Activated T-helper 1 cell treated with anti-CD3 and anti-CD28 coated beads, Interleukin-12 subunit alpha, Interleukin-12 subunit beta, Interleukin-2, Interleukin-4 antibody, amounts not matched to agents 30 ng/mL and 10 ng/mL and 1 ng/mL, durations not matched to agents 14 hours and 24 hours and 36 hours (primary cell): ENCODE measurements at regions of chr11 and their contacts with region 1.

Region 1: DNA sequence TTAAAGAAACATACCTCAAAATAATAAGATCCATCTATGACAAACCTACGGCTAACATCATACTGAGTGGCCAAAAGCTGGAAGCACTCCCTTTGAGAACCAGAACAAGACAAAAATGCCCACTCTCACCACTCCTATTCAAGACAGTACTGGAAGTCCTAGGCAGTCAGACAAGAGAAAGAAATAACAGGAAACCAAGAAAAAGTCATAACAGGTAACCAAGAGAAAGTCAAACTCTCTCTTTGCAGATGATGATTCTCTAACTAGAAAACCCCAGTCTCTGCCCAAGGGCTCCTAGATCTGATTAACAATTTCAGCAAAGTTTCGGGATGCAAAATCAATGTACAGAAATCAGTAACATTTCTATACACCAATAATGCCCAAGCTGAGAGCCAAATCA is 35.6 kb downstream of the TMEM123 start:
- DNase-seq: no peak
- H3K4me3 Mint-ChIP-seq: peak overlapping the region; percentile 26
- H3K27ac Mint-ChIP-seq: peak overlapping the region; percentile 67
- H3K4me1 Mint-ChIP-seq: peaks cover 84% of the 10 kb centered on the region
- H3K27me3 Mint-ChIP-seq: no peaks in the 10 kb centered on the region

Region 2: DNA sequence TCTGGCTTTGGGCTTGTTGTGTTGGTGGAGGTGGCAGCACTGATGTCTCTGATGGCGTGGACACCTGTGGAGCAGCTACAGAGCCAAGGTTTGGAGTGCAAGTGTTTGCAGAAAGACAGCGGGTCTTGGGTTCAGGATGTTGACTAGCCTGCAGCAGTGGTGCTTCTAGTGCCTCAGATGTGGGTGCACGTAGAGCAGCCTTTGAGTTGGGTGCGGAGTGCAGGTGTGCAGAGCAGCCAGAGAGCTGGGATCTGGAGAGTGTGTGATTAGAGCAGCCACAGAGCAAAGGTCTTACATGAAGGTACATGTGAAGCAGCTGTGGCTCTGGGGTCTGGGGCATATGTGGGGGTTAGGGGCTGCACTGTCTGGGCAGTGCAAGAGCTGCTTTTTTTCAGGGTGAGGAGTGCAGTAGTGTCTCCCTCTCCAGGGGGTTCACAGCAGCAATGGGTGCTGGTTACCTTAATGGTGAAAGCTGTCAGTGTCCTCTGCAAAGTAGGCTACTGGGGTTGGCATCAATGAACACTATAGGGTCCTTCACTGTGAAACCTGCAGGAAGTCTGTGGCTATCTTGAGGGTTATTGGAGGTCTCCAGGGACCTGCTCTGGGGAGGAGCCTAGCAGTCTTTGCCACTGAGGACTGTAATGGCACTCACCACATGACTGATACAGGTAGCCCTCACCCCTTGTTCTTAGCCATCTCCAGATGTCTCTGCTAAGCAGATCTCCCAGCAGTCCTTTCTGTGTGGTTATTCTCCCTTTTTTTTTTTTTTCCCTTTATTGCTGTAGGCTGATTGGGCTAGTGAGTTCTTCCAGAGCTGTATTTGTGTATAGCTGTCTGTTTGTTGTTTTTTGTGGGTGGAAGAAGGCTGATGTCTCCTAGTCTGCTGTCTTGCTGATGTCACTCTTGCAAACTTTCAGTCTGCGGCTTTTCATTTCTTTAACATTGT is 55.6 kb before region 1 on chr11:
- intact Hi-C with region 1: no loop called
- DNase-seq: no peak
- H3K4me3 Mint-ChIP-seq: peak overlapping the region; percentile 48
- H3K27ac Mint-ChIP-seq: peak overlapping the region; percentile 10
- H3K4me1 Mint-ChIP-seq: peaks cover 36% of the 10 kb centered on the region
- H3K27me3 Mint-ChIP-seq: no peaks in the 10 kb centered on the region

Region 3: DNA sequence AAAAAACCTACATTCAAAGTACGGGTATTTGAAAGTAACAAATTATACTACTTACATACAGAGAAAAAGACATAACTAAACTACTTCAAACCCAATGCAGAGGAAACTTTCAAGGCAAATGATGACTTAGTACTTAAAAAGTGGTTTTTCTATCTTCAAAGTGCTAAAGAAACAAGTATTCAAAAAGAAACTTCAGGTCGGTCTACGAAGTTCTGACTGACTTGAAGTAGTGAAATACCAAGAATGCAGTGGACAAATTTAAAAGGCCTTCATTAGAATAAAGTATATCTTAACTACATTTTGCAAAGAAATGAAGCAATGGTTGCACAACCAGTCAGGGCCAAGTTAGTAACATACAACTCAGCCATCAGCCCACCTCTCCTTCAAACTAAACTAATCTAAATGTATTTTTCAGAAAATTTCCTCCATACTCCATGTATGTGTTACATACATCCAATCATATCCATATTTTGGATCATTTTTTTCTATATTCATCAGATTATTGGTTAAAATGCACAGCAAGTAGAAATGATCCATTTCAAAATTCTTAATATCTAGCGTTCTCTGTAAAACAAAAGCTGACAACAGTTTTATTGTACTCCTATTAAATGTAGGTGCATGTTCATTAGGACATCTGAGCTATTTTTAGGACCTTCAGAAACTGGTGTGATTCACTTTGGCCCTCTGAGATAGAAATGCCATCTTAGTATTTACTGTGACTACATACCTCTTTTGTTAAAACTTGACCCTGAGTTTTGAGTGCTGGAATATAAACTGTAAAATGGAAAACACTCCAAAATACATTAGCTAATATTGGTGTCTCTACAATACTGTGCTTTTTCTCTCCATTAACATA is 20.0 kb before region 1 on chr11:
- intact Hi-C with region 1: loop called (anchors 1 kb)
- DNase-seq: no peak
- H3K4me3 Mint-ChIP-seq: peak overlapping the region; percentile 45
- H3K27ac Mint-ChIP-seq: peak overlapping the region; percentile 63
- H3K4me1 Mint-ChIP-seq: peaks cover 52% of the 10 kb centered on the region
- H3K27me3 Mint-ChIP-seq: no peaks in the 10 kb centered on the region

Region 4: DNA sequence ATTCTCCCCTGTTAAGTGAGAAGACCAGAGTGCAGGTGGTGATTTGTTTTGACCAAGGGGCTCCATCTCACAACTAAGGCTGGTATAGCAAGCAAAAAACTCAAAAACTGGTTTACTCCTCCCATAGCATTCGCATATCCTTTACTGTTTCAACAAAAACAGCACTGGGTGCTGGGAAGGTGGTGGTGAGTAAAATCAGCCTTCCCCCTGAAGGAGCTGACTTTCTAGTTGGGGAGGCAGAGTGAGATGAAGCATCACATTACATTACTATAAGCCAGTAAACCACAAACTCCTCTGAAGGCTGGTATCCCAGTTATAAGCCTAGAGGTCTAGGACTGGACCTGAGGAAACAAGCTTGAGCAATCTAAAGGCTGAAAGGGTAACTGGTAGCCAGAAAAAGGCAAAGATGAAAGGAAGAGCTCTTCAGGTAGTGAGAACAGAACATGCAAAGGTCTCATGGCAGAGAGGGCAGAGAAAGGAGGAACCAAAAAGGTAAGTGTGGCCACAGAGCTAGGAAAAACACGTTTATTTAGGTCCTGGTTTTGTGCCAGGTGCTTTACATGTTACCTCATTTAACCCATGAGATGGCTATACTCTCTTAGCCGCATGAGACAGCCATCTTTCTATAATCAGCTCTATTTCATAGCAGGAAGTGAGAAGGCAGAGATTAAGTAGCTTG is 13.3 kb after region 1 on chr11:
- intact Hi-C with region 1: loop called (anchors 1 kb)
- DNase-seq: no peak
- H3K4me3 Mint-ChIP-seq: peak overlapping the region; percentile 62
- H3K27ac Mint-ChIP-seq: peak overlapping the region; percentile 92
- H3K4me1 Mint-ChIP-seq: peaks cover 55% of the 10 kb centered on the region
- H3K27me3 Mint-ChIP-seq: no peaks in the 10 kb centered on the region

Region 5: GRCh38 chr11:102469172-102469821 is 52.3 kb after region 1 on chr11:
- intact Hi-C with region 1: no loop called
- DNase-seq: no peak
- H3K4me3 Mint-ChIP-seq: peak overlapping the region; percentile 1
- H3K27ac Mint-ChIP-seq: peak overlapping the region; percentile 4
- H3K4me1 Mint-ChIP-seq: peaks cover 93% of the 10 kb centered on the region
- H3K27me3 Mint-ChIP-seq: peaks cover 2% of the 10 kb centered on the region